Activated CD4-positive, alpha-beta T cell treated with anti-CD3 and anti-CD28 coated beads for 36 hours (primary cell): ENCODE measurements at regions of chr5 and their contacts with region 1.

Region 1: GRCh38 chr5:55421074-55421529 is 113.3 kb downstream of the MTREX start:
- DNase-seq: peak; percentile 45
- ATAC-seq: peak; percentile 99
- H3K4me3 Mint-ChIP-seq: no peak overlapping the region
- H3K27ac Mint-ChIP-seq: no peak overlapping the region
- H3K4me1 Mint-ChIP-seq: peaks cover 33% of the 10 kb centered on the region
- H3K27me3 Mint-ChIP-seq: no peaks in the 10 kb centered on the region

Region 2: DNA sequence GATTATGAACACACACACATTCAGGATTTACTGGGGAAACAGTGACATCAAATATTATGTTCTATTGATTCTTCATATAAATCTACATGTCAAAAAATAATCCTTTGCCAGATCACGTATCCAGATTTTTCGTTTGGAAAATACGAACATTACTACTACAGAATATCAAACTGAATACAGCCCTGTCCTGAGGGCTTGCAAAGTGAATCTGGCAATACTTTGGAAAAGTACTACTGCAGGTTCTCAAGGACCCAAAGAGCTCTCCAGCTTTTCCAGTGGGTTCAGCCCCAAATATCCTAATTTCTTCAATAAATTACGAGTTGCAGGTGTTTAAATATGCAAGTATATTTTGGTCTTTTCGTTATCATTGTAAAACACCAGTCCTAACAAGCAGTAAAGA is 1861.1 kb before region 1 on chr5:
- CTCF ChIA-PET with region 1: no interaction called
- POLR2A ChIA-PET with region 1: no interaction called
- intact Hi-C with region 1: no loop called
- DNase-seq: no peak
- ATAC-seq: peak; percentile 7
- H3K4me3 Mint-ChIP-seq: peak overlapping the region; percentile 84
- H3K27ac Mint-ChIP-seq: no peak overlapping the region
- H3K4me1 Mint-ChIP-seq: peaks cover 25% of the 10 kb centered on the region
- H3K27me3 Mint-ChIP-seq: peaks cover 23% of the 10 kb centered on the region

Region 3: DNA sequence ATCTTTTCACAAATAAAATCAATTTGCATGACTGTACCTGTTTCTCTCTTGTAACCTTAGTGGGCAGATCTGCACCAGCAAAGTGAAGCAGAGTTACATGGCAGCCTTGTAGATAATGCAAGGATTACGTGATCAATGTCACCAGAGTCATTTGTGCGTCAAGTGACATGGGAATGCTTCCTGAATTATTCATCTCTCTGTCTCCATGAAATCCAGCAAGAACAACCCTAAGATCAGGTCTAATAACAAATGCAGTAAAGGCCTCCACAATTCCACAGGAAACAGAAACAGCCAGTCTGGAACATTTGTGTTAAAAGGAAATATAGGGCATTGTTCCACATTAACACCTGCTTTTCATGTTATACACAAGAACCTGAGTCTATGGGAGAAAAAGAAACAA is 310.9 kb before region 1 on chr5:
- CTCF ChIA-PET with region 1: no interaction called
- POLR2A ChIA-PET with region 1: no interaction called
- intact Hi-C with region 1: no loop called
- DNase-seq: no peak
- ATAC-seq: no peak
- H3K4me3 Mint-ChIP-seq: no peak overlapping the region
- H3K27ac Mint-ChIP-seq: no peak overlapping the region
- H3K4me1 Mint-ChIP-seq: peaks cover 15% of the 10 kb centered on the region
- H3K27me3 Mint-ChIP-seq: no peaks in the 10 kb centered on the region

Region 4: GRCh38 chr5:55134053-55134722 is 286.9 kb before region 1 on chr5:
- CTCF ChIA-PET with region 1: no interaction called
- POLR2A ChIA-PET with region 1: no interaction called
- intact Hi-C with region 1: no loop called
- DNase-seq: peak; percentile 15
- ATAC-seq: peak; percentile 60
- H3K4me3 Mint-ChIP-seq: no peak overlapping the region
- H3K27ac Mint-ChIP-seq: no peak overlapping the region
- H3K4me1 Mint-ChIP-seq: peaks cover 14% of the 10 kb centered on the region
- H3K27me3 Mint-ChIP-seq: peaks cover 4% of the 10 kb centered on the region

Region 5: GRCh38 chr5:55364537-55365055 is 56.5 kb before region 1 on chr5:
- CTCF ChIA-PET with region 1: no interaction called
- POLR2A ChIA-PET with region 1: no interaction called
- intact Hi-C with region 1: loop called (anchors 1 kb)
- DNase-seq: peak; percentile 31
- ATAC-seq: peak; percentile 94
- H3K4me3 Mint-ChIP-seq: peak overlapping the region; percentile 2
- H3K27ac Mint-ChIP-seq: peak overlapping the region; percentile 69
- H3K4me1 Mint-ChIP-seq: peaks cover 22% of the 10 kb centered on the region
- H3K27me3 Mint-ChIP-seq: no peaks in the 10 kb centered on the region

Region 6: GRCh38 chr5:55439008-55439407 is 17.9 kb after region 1 on chr5:
- CTCF ChIA-PET with region 1: interaction called, 7 read pairs
- POLR2A ChIA-PET with region 1: no interaction called
- intact Hi-C with region 1: loop called (anchors 1 kb)
- DNase-seq: no peak
- ATAC-seq: no peak
- H3K4me3 Mint-ChIP-seq: no peak overlapping the region
- H3K27ac Mint-ChIP-seq: no peak overlapping the region
- H3K4me1 Mint-ChIP-seq: peaks cover 46% of the 10 kb centered on the region
- H3K27me3 Mint-ChIP-seq: no peaks in the 10 kb centered on the region

Region 7: DNA sequence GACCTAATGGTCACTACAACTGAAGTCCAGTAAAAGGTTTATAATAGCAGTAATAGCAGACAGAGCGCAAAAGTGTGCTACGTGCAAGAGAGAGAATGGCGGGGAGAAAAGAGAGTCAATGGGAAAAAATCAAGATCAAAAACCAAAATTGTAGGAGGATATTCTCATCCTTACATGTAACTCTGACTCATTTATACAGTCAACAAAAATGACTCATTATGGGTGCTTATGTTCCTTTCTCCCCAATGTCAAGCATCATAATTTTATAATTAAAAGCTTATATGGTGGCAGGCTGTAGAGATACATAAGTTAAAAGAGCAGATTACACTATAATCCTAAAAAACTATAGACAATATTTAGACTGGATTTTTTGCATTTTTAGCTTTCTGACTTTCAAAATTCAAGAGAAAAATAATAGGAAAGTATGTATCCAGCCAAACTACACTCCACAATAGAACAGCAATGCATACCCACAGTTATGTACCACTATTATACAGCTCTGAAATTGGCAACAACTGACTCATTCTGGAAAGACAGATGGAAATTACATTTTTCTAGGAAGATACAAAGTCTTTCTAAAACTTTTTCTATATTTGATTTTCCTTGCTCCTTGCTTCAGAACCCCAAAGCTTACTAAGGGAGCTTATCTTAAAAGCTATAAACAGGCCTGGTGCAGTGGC is 35.3 kb after region 1 on chr5:
- CTCF ChIA-PET with region 1: no interaction called
- POLR2A ChIA-PET with region 1: no interaction called
- intact Hi-C with region 1: loop called in 1 of 2 experiments (anchors 1 kb)
- DNase-seq: no peak
- ATAC-seq: peak; percentile 74
- H3K4me3 Mint-ChIP-seq: no peak overlapping the region
- H3K27ac Mint-ChIP-seq: no peak overlapping the region
- H3K4me1 Mint-ChIP-seq: peaks cover 8% of the 10 kb centered on the region
- H3K27me3 Mint-ChIP-seq: no peaks in the 10 kb centered on the region

Region 8: GRCh38 chr5:55534436-55535198 is 113.5 kb after region 1 on chr5 and contains the start of gene PLPP1:
- CTCF ChIA-PET with region 1: no interaction called
- POLR2A ChIA-PET with region 1: no interaction called
- intact Hi-C with region 1: loop called (anchors 1 to 2 kb)
- DNase-seq: peak; percentile 91
- ATAC-seq: peak; percentile 89
- H3K4me3 Mint-ChIP-seq: peak within 1 kb of the TSS; percentile 79
- H3K27ac Mint-ChIP-seq: peak within 1 kb of the TSS; percentile 88
- H3K4me1 Mint-ChIP-seq: peaks cover 27% of the 10 kb centered on the region
- H3K27me3 Mint-ChIP-seq: no peaks in the 10 kb centered on the region
- total RNA-seq, gene PLPP1: 7.9 to 8.2 TPM

Region 9: GRCh38 chr5:55763746-55764420 is 342.8 kb after region 1 on chr5:
- CTCF ChIA-PET with region 1: no interaction called
- POLR2A ChIA-PET with region 1: no interaction called
- intact Hi-C with region 1: loop called in 1 of 2 experiments (anchors 10 kb)
- DNase-seq: no peak
- ATAC-seq: peak; percentile 69
- H3K4me3 Mint-ChIP-seq: no peak overlapping the region
- H3K27ac Mint-ChIP-seq: peak overlapping the region; percentile 15
- H3K4me1 Mint-ChIP-seq: peaks cover 18% of the 10 kb centered on the region
- H3K27me3 Mint-ChIP-seq: peaks cover 7% of the 10 kb centered on the region

Region 10: GRCh38 chr5:55771175-55771655 is 350.1 kb after region 1 on chr5:
- CTCF ChIA-PET with region 1: no interaction called
- POLR2A ChIA-PET with region 1: no interaction called
- intact Hi-C with region 1: loop called (anchors 1 to 10 kb)
- DNase-seq: no peak
- ATAC-seq: peak; percentile 93
- H3K4me3 Mint-ChIP-seq: no peak overlapping the region
- H3K27ac Mint-ChIP-seq: no peak overlapping the region
- H3K4me1 Mint-ChIP-seq: peaks cover 13% of the 10 kb centered on the region
- H3K27me3 Mint-ChIP-seq: peaks cover 11% of the 10 kb centered on the region